Activated naive CD4-positive, alpha-beta T cell treated with anti-CD3 and anti-CD28 coated beads for 36 hours (primary cell): ENCODE measurements at regions of chr3 and their contacts with region 1.

Region 1: DNA sequence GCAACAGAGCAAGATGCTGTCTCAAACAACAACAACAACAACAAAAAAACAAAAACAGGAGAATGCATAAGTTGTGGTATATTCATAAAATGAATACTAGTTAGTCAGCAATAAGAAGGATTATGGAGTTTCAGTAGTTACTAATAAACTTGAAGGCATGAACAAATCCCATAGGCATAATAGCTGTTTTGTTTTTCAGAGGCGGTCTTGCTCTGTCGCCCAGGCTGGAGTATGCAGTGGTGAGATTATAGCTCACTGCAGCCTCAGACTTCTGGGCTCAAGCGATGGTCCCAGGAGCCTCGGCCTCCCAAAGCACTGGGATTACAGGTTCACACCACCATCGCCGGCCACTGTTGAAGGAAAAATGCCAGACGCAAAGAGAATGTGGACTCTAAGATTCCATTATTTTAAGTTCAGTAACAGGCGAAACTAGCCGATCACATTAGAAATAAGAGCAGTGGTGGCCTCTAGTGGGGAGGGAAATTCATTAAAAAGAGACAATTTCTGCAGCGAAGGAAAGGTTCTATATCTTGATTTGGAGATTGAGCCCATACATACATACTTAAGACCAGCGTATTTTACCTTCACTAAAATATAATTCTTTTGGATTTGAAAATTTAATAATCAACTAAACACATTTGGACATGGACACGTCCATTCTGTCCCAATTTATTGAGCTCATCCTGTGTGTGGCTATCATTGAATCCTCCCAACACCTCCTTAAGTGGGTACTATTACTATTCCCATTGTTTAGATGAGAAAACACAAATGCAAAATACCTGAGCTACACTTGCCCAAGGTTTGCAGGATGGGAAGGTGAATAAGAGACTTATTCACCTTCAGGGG is 27.4 kb upstream of the HDAC11 start:
- DNase-seq: peak; percentile 67
- H3K4me3 Mint-ChIP-seq: peak overlapping the region; percentile 91
- H3K27ac Mint-ChIP-seq: peak overlapping the region; percentile 93
- H3K4me1 Mint-ChIP-seq: peaks cover 24% of the 10 kb centered on the region
- H3K27me3 Mint-ChIP-seq: no peaks in the 10 kb centered on the region

Region 2: GRCh38 chr3:13229273-13229949 is 223.3 kb before region 1 on chr3:
- CTCF ChIA-PET with region 1: interaction called, 11 read pairs
- intact Hi-C with region 1: loop called (anchors 2 kb)
- DNase-seq: peak; percentile 43
- H3K4me3 Mint-ChIP-seq: no peak overlapping the region
- H3K27ac Mint-ChIP-seq: no peak overlapping the region
- H3K4me1 Mint-ChIP-seq: peaks cover 6% of the 10 kb centered on the region
- H3K27me3 Mint-ChIP-seq: no peaks in the 10 kb centered on the region

Region 3: GRCh38 chr3:13352621-13353131 is 100.0 kb before region 1 on chr3:
- CTCF ChIA-PET with region 1: interaction called, 48 read pairs
- intact Hi-C with region 1: no loop called
- DNase-seq: peak; percentile 69
- H3K4me3 Mint-ChIP-seq: no peak overlapping the region
- H3K27ac Mint-ChIP-seq: peak overlapping the region; percentile 64
- H3K4me1 Mint-ChIP-seq: peaks cover 59% of the 10 kb centered on the region
- H3K27me3 Mint-ChIP-seq: no peaks in the 10 kb centered on the region

Region 4: GRCh38 chr3:13414040-13414729 is 38.5 kb before region 1 on chr3:
- CTCF ChIA-PET with region 1: interaction called, 72 read pairs
- intact Hi-C with region 1: loop called (anchors 1 kb)
- DNase-seq: peak; percentile 78
- H3K4me3 Mint-ChIP-seq: peak overlapping the region; percentile 63
- H3K27ac Mint-ChIP-seq: peak overlapping the region; percentile 93
- H3K4me1 Mint-ChIP-seq: peaks cover 61% of the 10 kb centered on the region
- H3K27me3 Mint-ChIP-seq: no peaks in the 10 kb centered on the region

Region 5: DNA sequence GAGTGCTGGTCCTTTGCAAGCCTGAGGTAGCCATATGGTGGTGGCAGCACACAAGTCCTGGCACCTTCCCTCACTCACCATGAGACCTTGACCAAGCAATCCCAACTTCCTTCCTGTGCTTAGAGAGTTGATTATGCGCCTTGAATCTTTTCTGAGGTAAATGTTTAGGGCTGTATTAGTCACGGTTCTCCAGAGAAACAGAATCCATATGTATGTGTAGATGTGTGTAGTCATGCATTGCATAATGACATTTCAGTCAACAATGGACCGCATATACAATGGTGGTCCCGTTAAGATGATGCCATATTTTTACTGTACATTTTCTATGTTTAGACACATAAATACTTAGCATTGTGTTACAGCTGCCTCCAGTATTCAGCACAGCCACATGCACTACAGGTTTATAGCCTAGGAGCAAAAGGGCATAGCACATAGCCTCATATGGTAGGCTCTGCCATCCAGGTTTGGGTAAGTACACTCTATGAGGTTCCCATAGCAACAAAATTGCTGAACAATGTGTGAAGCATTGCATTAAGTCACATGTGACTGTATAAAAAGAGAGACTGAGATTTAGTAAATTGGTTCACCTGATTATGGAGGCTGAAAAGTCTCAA is 12.4 kb before region 1 on chr3:
- CTCF ChIA-PET with region 1: interaction called, 11 read pairs
- intact Hi-C with region 1: no loop called
- DNase-seq: no peak
- H3K4me3 Mint-ChIP-seq: no peak overlapping the region
- H3K27ac Mint-ChIP-seq: no peak overlapping the region
- H3K4me1 Mint-ChIP-seq: no peaks in the 10 kb centered on the region
- H3K27me3 Mint-ChIP-seq: no peaks in the 10 kb centered on the region

Region 6: DNA sequence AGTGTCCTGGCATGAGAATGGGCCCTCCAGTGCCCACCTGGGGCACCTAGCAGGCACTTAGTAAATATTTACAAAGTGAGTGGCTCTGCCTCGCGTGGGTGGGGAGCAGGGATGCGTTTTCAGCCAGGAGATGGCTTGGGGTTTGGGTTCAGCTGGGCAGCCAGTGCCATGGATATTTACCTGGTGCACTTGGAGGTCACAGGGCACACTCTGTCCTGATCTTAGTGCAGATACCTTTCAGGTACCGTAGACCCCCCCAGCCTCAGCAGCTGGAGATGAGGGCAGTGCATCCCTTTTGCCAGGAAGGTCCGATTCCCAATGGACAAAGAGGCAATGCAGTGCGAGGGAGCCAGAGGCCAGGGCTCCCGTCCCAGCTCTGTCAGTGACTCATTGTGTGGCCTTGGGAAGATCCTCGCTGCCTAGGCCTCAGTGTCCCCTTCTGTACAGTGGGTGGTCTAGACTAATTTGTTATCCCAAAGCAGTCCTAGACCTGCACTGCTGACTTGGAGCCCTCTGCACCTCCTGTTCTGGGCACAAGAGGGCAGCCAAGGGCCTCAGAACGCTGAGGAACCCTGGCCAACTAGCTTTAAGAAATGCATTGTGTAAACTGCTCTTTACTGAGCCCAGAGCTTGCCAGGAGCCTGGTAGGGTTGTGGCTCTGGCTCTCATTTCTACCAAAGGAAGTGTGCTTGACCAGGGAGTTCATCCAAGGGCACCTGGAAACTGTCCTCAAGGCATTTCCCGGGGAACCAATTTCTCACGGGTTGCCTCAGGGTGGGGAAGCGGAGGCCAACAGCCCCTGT is 43.4 kb after region 1 on chr3:
- CTCF ChIA-PET with region 1: no interaction called
- intact Hi-C with region 1: no loop called
- DNase-seq: peak; percentile 83
- H3K4me3 Mint-ChIP-seq: no peak overlapping the region
- H3K27ac Mint-ChIP-seq: no peak overlapping the region
- H3K4me1 Mint-ChIP-seq: no peaks in the 10 kb centered on the region
- H3K27me3 Mint-ChIP-seq: no peaks in the 10 kb centered on the region